Mammary epithelial cell (primary cell): ENCODE measurements at regions of chr21 and their contacts with region 1.

Region 1: GRCh38 chr21:17763288-17764037 is 55.7 kb downstream of the C21orf91 start:
- DNase-seq: peak; percentile 24
- H3K4me3 ChIP-seq: no peak overlapping the region
- H3K27ac ChIP-seq: no peak overlapping the region
- H3K4me1 ChIP-seq: no peaks in the 10 kb centered on the region
- H3K27me3 ChIP-seq: no peaks in the 10 kb centered on the region
- CTCF ChIP-seq: no peak

Region 2: GRCh38 chr21:17795146-17796036 is 31.9 kb after region 1 on chr21:
- CTCF ChIA-PET with region 1: no interaction called
- dilution Hi-C with region 1: no loop called
- in situ Hi-C with region 1: no loop called
- intact Hi-C with region 1: loop called (anchors 1 kb)
- DNase-seq: no peak
- H3K4me3 ChIP-seq: no peak overlapping the region
- H3K27ac ChIP-seq: no peak overlapping the region
- H3K4me1 ChIP-seq: no peaks in the 10 kb centered on the region
- H3K27me3 ChIP-seq: no peaks in the 10 kb centered on the region
- CTCF ChIP-seq: no peak

Region 3: DNA sequence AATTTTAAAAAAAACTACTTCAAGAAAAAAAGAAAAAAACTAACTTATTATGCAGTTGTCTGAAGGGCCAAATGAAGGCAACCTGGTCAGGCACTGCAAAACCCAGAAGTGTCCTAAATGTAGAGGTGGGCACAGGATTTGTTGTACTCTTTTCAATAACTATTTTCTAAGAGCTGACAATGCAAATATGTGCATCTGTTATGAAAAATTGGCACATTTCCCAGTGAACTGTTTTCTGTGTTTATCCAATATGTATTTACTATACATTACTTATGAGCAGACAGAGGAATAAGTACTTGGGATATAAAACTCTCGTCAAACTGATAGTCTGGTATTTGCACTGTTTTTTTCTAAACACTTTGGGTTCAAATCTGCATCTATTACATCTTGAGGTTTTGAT is 243.7 kb after region 1 on chr21:
- CTCF ChIA-PET with region 1: no interaction called
- dilution Hi-C with region 1: no loop called
- in situ Hi-C with region 1: no loop called
- intact Hi-C with region 1: no loop called
- DNase-seq: no peak
- H3K4me3 ChIP-seq: no peak overlapping the region
- H3K27ac ChIP-seq: no peak overlapping the region
- H3K4me1 ChIP-seq: no peaks in the 10 kb centered on the region
- H3K27me3 ChIP-seq: no peaks in the 10 kb centered on the region
- CTCF ChIP-seq: no peak